Activated naive CD4-positive, alpha-beta T cell treated with anti-CD3 and anti-CD28 coated beads, Interleukin-2, amount 10 ng/mL, durations not matched to agents 7 days and 5 days (primary cell): ENCODE measurements at regions of chr15 and their contacts with region 1.

Region 1: DNA sequence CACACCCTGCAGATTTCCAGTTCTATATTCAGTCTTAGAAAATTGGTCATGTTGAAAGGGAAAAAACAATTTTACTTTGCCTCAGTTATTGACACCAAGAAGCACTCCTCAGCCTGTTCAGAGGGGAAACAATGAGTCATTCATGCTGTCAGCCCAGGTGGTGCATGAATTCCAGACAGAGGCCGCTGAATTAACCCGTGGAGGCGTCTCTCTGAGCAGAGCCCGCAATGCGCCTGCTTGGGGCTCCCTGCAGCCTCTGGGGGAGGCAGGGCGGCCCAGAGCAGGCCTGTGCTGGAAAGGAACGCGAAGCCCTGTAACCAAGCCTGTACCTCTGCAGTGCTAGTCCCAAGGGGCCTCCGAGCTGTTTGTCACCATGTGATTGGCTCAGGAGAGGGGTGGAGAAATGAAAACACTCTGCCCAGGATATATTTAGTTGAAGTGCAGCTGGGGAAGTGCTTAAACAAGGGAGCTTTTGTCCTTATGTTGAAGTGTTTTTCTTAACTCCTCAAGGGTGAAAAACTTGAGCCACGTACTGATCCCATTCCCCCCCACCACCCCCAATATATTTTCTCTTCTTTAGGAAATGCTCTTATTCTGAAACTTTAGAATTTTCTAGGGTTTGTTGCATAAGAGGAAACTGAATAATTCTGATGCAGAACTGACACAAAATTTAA is 68.3 kb upstream of the CHD2 start:
- DNase-seq: peak; percentile 95
- H3K4me3 Mint-ChIP-seq: peak overlapping the region; percentile 65
- H3K27ac Mint-ChIP-seq: peak overlapping the region; percentile 98
- H3K4me1 Mint-ChIP-seq: peaks cover 56% of the 10 kb centered on the region
- H3K27me3 Mint-ChIP-seq: no peaks in the 10 kb centered on the region

Region 2: GRCh38 chr15:92881802-92882696 is 50.3 kb after region 1 on chr15:
- CTCF ChIA-PET with region 1: interaction called, 19 read pairs
- DNase-seq: peak; percentile 98
- H3K4me3 Mint-ChIP-seq: peak overlapping the region; percentile 90
- H3K27ac Mint-ChIP-seq: peak overlapping the region; percentile 99
- H3K4me1 Mint-ChIP-seq: peaks cover 57% of the 10 kb centered on the region
- H3K27me3 Mint-ChIP-seq: peaks cover 12% of the 10 kb centered on the region

Region 3: GRCh38 chr15:92989470-92989869 is 157.7 kb after region 1 on chr15:
- CTCF ChIA-PET with region 1: no interaction called
- DNase-seq: no peak
- H3K4me3 Mint-ChIP-seq: no peak overlapping the region
- H3K27ac Mint-ChIP-seq: no peak overlapping the region
- H3K4me1 Mint-ChIP-seq: no peaks in the 10 kb centered on the region
- H3K27me3 Mint-ChIP-seq: no peaks in the 10 kb centered on the region

Region 4: GRCh38 chr15:93072011-93072410 is 240.2 kb after region 1 on chr15:
- CTCF ChIA-PET with region 1: no interaction called
- DNase-seq: no peak
- H3K4me3 Mint-ChIP-seq: no peak overlapping the region
- H3K27ac Mint-ChIP-seq: no peak overlapping the region
- H3K4me1 Mint-ChIP-seq: peaks cover 15% of the 10 kb centered on the region
- H3K27me3 Mint-ChIP-seq: peaks cover 95% of the 10 kb centered on the region